CD4-positive, alpha-beta memory T cell (primary cell): ENCODE measurements at regions of chr2 and their contacts with region 1.

Region 1: GRCh38 chr2:130372055-130372832 is 16.4 kb downstream of the PTPN18 start:
- DNase-seq: peak; percentile 65 to 76 (median 74)
- H3K4me3 ChIP-seq: peak overlapping the region; percentile 77 to 88
- H3K4me3 Mint-ChIP-seq: peak overlapping the region; percentile 92 to 98 (median 95)
- H3K27ac ChIP-seq: peak overlapping the region; percentile 57
- H3K27ac Mint-ChIP-seq: peak overlapping the region; percentile 90 to 98 (median 97)
- H3K4me1 ChIP-seq: peaks cover 64% of the 10 kb centered on the region
- H3K4me1 Mint-ChIP-seq: peaks cover 51 to 73% (median 64%) of the 10 kb centered on the region in 4 donors
- H3K27me3 ChIP-seq: no peaks in the 10 kb centered on the region
- H3K27me3 Mint-ChIP-seq: no peaks in the 10 kb centered on the region

Region 2: GRCh38 chr2:130303169-130303568 is 69.1 kb before region 1 on chr2:
- CTCF ChIA-PET with region 1: no interaction called
- POLR2A ChIA-PET with region 1: no interaction called
- intact Hi-C with region 1: no loop called
- DNase-seq: no peak
- H3K4me3 ChIP-seq: no peak overlapping the region
- H3K4me3 Mint-ChIP-seq: no peak overlapping the region
- H3K27ac ChIP-seq: no peak overlapping the region
- H3K27ac Mint-ChIP-seq: no peak overlapping the region
- H3K4me1 ChIP-seq: no peaks in the 10 kb centered on the region
- H3K4me1 Mint-ChIP-seq: no peaks in the 10 kb centered on the region
- H3K27me3 ChIP-seq: no peaks in the 10 kb centered on the region
- H3K27me3 Mint-ChIP-seq: peaks cover 10 to 17% of the 10 kb centered on the region in 2 donors

Region 3: DNA sequence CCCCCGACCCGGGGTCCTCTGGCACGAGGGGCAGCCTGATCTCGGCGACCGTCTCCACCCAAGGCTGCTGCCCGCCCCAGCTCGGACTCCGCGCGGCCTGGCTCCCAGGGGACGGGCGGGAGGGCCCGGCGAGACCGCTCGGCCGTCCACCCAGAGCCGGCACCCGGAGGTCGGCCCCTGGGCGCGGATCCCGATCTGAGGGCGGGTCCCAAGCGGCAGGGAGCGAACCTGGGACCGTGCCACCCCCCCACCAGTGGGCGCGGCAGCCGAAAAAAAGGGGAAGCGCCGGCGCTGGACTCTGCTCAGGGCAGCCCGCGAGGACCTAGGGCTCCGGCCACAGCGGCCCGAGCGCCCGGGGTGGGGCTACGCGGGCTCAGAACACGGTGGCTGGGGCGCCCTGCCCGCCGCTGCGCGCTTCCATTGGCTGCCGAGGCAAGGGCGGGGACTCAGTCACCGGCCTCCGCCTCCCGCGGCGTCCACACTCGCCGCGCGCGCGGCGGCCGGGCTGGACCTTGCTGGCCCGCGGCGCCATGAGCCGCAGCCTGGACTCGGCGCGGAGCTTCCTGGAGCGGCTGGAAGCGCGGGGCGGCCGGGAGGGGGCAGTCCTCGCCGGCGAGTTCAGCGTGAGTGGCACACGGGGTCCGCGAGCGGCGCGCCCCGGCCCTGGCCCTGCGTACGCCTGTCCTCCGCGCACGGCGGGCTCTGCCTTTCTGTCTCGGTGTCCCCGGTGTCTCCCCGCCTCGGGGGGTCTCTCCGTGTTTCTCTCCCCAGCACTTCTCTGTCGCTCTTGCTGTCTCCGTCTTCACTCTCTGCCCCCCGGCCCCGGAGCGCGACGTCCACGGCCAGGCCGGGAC is 16.4 kb before region 1 on chr2 and contains the start of gene PTPN18:
- CTCF ChIA-PET with region 1: interaction called, 7 read pairs
- POLR2A ChIA-PET with region 1: interaction called, 9 read pairs
- intact Hi-C with region 1: loop called (anchors 1 kb)
- DNase-seq: peak; percentile 53 to 59 (median 57)
- H3K4me3 ChIP-seq: peak within 1 kb of the TSS; percentile 52 to 63
- H3K4me3 Mint-ChIP-seq: peak within 1 kb of the TSS; percentile 81 to 87 (median 86)
- H3K27ac ChIP-seq: peak within 1 kb of the TSS; percentile 35
- H3K27ac Mint-ChIP-seq: peak within 1 kb of the TSS in 6 of 7 donors; percentile 42 to 78 (median 68)
- H3K4me1 ChIP-seq: peaks cover 14% of the 10 kb centered on the region
- H3K4me1 Mint-ChIP-seq: peaks cover 10 to 18% (median 14%) of the 10 kb centered on the region in 4 donors
- H3K27me3 ChIP-seq: no peaks in the 10 kb centered on the region
- H3K27me3 Mint-ChIP-seq: no peaks in the 10 kb centered on the region
- total RNA-seq, gene PTPN18: 54.9 to 67.2 TPM

Region 4: DNA sequence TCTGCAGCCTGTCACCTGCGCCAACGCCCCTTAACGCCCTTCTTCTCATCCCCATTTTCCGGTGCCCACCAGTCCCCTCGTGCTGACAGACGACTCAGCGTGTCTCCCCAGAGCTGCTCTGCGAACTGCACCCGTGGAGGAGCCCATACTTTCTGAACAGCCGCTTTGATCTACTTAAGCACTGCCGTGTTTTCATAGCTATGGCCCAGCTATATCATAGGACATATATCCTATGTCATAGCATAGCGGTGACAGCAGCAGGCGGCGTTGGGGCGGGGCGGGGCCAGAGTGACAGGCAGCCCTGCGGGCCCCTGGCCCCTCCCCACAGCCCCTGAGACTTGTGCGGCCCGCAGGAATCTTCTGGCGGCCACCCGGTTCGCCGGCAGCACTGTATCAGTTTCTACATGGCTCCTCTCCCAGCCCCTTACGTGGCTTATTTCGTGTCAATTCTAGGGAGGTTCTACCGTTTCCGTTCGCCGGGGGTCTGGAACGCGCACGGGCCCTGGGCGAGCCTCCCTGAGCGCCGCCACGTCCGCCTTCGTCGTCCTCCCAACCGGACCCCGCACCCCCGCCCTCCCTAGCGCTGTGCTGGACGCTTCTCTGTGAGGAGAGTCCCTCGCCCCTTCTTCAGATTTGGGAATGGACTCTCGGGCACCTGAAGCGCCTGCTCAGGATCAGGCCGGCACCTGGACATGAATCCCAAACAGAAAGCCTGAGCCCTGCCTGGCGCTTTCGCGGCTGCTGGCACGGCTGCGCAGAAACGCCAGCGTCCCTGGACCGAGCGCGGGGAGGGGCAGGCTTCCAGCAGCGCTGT is 19.0 kb after region 1 on chr2:
- CTCF ChIA-PET with region 1: interaction called, 17 read pairs
- POLR2A ChIA-PET with region 1: interaction called, 3 read pairs
- intact Hi-C with region 1: no loop called
- DNase-seq: peak; percentile 45 to 76 (median 49)
- H3K4me3 ChIP-seq: peak overlapping the region; percentile 47 to 52
- H3K4me3 Mint-ChIP-seq: peak overlapping the region; percentile 76 to 98 (median 91)
- H3K27ac ChIP-seq: no peak overlapping the region
- H3K27ac Mint-ChIP-seq: peak overlapping the region in 6 of 7 donors; percentile 39 to 94 (median 90)
- H3K4me1 ChIP-seq: peaks cover 8% of the 10 kb centered on the region
- H3K4me1 Mint-ChIP-seq: peaks cover 5 to 23% (median 9%) of the 10 kb centered on the region in 4 donors
- H3K27me3 ChIP-seq: no peaks in the 10 kb centered on the region
- H3K27me3 Mint-ChIP-seq: peaks cover 2 to 6% of the 10 kb centered on the region in 2 donors

Region 5: DNA sequence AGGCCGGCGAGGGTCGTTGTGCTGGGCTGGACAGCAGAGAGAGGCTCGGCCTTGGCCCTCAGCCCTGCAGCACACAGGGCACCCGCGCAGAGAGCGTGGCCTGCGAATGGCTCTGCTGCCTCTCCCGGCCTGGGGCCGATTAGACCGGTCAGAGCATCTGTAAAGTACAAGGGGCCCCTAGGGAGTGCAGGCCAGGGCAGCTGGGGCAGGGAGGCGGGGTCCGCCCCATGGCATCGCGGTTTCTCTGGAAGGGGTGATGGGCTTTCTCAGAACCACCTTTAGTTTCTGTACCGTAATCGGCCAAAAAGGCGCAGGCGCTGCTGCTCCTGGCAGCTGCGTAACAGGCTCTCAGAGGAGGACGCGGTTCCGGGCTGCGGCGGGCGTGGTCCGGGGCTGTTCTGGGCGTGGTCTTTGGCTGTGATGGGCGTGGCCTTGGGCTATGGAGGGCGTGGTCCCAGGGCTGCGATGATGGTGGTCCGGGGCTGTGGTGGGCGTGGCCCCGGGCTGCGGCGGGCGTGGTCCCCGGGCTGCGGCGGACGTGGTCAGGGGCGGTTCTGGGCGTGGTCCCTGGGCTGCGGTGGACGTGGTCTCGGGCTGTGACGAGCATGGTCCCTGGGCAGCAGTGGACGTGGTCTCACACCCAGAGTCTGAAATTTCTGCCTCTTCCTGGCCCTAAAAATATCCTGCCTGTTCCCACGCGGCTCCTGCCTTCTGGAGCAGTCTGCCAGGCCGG is 355.2 kb after region 1 on chr2:
- CTCF ChIA-PET with region 1: no interaction called
- POLR2A ChIA-PET with region 1: no interaction called
- intact Hi-C with region 1: loop called (anchors 5 kb)
- DNase-seq: peak; percentile 90 to 95 (median 92)
- H3K4me3 ChIP-seq: peak overlapping the region; percentile 81 to 83
- H3K4me3 Mint-ChIP-seq: peak overlapping the region; percentile 85 to 92 (median 88)
- H3K27ac ChIP-seq: peak overlapping the region; percentile 80
- H3K27ac Mint-ChIP-seq: peak overlapping the region; percentile 89 to 97 (median 95)
- H3K4me1 ChIP-seq: peaks cover 22% of the 10 kb centered on the region
- H3K4me1 Mint-ChIP-seq: peaks cover 5 to 34% (median 17%) of the 10 kb centered on the region in 4 donors
- H3K27me3 ChIP-seq: no peaks in the 10 kb centered on the region
- H3K27me3 Mint-ChIP-seq: no peaks in the 10 kb centered on the region

Region 6: GRCh38 chr2:131064589-131065512 is 692.6 kb after region 1 on chr2:
- CTCF ChIA-PET with region 1: no interaction called
- POLR2A ChIA-PET with region 1: no interaction called
- intact Hi-C with region 1: no loop called
- DNase-seq: no peak
- H3K4me3 ChIP-seq: no peak overlapping the region
- H3K4me3 Mint-ChIP-seq: peak overlapping the region in 2 of 8 donors; percentile 0 to 45
- H3K27ac ChIP-seq: no peak overlapping the region
- H3K27ac Mint-ChIP-seq: peak overlapping the region in 4 of 7 donors; percentile 48 to 86 (median 70)
- H3K4me1 ChIP-seq: no peaks in the 10 kb centered on the region
- H3K4me1 Mint-ChIP-seq: peaks cover 29 to 58% (median 33%) of the 10 kb centered on the region in 4 donors
- H3K27me3 ChIP-seq: no peaks in the 10 kb centered on the region
- H3K27me3 Mint-ChIP-seq: no peaks in the 10 kb centered on the region

Region 7: GRCh38 chr2:131402320-131403039 is 1030.2 kb after region 1 on chr2:
- CTCF ChIA-PET with region 1: no interaction called
- POLR2A ChIA-PET with region 1: no interaction called
- intact Hi-C with region 1: no loop called
- DNase-seq: no peak
- H3K4me3 ChIP-seq: no peak overlapping the region
- H3K4me3 Mint-ChIP-seq: no peak overlapping the region
- H3K27ac ChIP-seq: no peak overlapping the region
- H3K27ac Mint-ChIP-seq: no peak overlapping the region
- H3K4me1 ChIP-seq: no peaks in the 10 kb centered on the region
- H3K4me1 Mint-ChIP-seq: no peaks in the 10 kb centered on the region
- H3K27me3 ChIP-seq: no peaks in the 10 kb centered on the region
- H3K27me3 Mint-ChIP-seq: peaks cover 11 to 15% of the 10 kb centered on the region in 2 donors